Heart right ventricle (tissue), 16 donors: ENCODE measurements at regions of chr15 and their contacts with region 1.

Region 1: DNA sequence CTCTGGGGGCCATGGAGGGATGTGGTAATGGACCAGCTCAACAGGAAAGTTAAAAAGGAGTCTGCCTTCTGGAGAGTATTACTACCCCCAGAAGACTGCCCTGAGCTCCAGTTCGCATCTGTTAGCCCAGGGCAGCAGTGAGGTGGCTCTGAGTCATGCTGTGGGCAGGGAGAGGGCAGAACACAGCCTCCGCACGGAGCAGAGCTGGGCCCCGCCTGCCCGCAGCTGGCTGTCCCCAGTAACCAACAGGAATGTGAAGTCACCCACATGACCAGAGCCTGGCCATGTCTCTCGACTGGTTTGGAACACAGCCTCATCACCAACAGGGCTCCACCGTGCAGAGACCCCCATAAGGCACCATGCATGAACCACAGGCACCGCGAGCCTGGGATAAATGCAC is 62.1 kb downstream of the CYFIP1 start:
- DNase-seq: no peak
- ATAC-seq: no peak
- H3K4me3 ChIP-seq: no peak overlapping the region
- H3K27ac ChIP-seq: no peak overlapping the region
- H3K4me1 ChIP-seq: no peaks in the 10 kb centered on the region
- H3K27me3 ChIP-seq: no peaks in the 10 kb centered on the region
- CTCF ChIP-seq: no peak

Region 2: DNA sequence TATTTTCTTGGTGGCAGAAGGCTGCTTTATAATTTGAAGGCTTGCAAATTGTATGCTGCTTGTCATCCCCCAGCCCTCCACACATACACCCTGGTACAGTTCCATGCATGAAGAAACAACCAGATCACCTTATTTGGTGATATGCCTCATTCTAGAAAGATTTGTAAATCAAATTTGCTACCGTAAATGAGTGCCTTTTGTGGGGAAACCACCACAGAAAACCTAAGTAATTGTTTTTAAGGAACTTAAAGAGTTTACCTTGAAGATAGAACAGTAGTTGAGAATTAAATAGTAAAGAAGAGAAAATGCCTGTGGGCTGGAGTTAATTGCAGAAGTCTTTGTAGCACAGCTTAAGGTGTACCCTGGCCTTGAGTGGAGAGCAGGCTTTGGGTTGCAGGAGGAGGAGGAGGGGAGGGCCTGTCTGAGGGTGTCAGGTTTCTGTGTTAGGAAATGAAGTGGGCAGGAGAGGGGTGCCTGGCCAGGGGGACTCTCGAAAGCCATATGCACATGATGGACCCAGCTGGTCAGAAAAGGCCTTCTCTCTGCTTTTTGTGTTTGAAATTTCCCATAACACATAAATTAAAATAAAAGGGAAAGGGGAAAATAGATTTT is 72.7 kb before region 1 on chr15:
- intact Hi-C with region 1: no loop called
- DNase-seq: no peak
- ATAC-seq: no peak
- H3K4me3 ChIP-seq: no peak overlapping the region
- H3K27ac ChIP-seq: no peak overlapping the region
- H3K4me1 ChIP-seq: peaks cover 0 to 17% (median 12%) of the 10 kb centered on the region in 9 donors
- H3K27me3 ChIP-seq: no peaks in the 10 kb centered on the region
- CTCF ChIP-seq: no peak

Region 3: GRCh38 chr15:22968366-22968765 is 50.3 kb after region 1 on chr15:
- intact Hi-C with region 1: loop called in 2 of 10 experiments (anchors 10 kb)
- DNase-seq: no peak
- ATAC-seq: peak in 6 of 8 donors; percentile 36 to 89 (median 60)
- H3K4me3 ChIP-seq: no peak overlapping the region
- H3K27ac ChIP-seq: peak overlapping the region in 4 of 10 donors; percentile 32 to 60 (median 44)
- H3K4me1 ChIP-seq: peaks cover 4 to 50% (median 37%) of the 10 kb centered on the region in 9 donors
- H3K27me3 ChIP-seq: no peaks in the 10 kb centered on the region
- CTCF ChIP-seq: no peak

Region 4: GRCh38 chr15:23014394-23015000 is 96.4 kb after region 1 on chr15:
- intact Hi-C with region 1: no loop called
- DNase-seq: no peak
- ATAC-seq: peak in 2 of 8 donors; percentile 12 to 14
- H3K4me3 ChIP-seq: no peak overlapping the region
- H3K27ac ChIP-seq: no peak overlapping the region
- H3K4me1 ChIP-seq: no peaks in the 10 kb centered on the region
- H3K27me3 ChIP-seq: no peaks in the 10 kb centered on the region
- CTCF ChIP-seq: no peak